ENCODE measurements at regions of chr13 and their contacts with region 1.

Region 1: GRCh38 chr13:99916366-99917103 is 55.0 kb downstream of the ZIC5 start:
- DNase-seq: peak; percentile 86
- H3K4me3 Mint-ChIP-seq: no peak overlapping the region
- H3K27ac Mint-ChIP-seq: no peak overlapping the region
- H3K4me1 Mint-ChIP-seq: peaks cover 6% of the 10 kb centered on the region
- H3K27me3 Mint-ChIP-seq: no peaks in the 10 kb centered on the region
- CTCF ChIP-seq: peak; percentile 91

Region 2: DNA sequence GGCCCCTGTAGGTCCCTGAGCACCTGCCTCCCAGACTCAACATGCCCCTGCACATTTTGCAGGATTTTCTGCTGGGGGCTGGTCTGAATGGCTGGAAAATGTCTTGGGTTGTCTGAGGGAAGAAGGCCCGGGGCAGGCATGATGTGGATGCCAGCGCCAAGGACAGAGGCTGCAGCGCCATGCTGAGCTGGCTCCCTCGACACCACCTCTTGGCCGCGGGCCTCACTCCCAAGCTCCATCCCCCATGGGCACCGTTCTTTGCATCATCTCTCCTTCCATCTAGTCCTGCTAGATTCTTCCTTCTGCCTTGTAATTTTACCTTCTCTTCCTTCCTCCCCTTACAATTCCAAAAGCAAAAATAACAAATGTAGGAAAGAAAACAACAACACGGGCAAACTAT is 15.6 kb before region 1 on chr13:
- CTCF ChIA-PET with region 1: interaction called, 11 read pairs
- POLR2A ChIA-PET with region 1: no interaction called
- intact Hi-C with region 1: no loop called
- DNase-seq: no peak
- H3K4me3 Mint-ChIP-seq: no peak overlapping the region
- H3K27ac Mint-ChIP-seq: no peak overlapping the region
- H3K4me1 Mint-ChIP-seq: peaks cover 7% of the 10 kb centered on the region
- H3K27me3 Mint-ChIP-seq: no peaks in the 10 kb centered on the region
- CTCF ChIP-seq: no peak

Region 3: DNA sequence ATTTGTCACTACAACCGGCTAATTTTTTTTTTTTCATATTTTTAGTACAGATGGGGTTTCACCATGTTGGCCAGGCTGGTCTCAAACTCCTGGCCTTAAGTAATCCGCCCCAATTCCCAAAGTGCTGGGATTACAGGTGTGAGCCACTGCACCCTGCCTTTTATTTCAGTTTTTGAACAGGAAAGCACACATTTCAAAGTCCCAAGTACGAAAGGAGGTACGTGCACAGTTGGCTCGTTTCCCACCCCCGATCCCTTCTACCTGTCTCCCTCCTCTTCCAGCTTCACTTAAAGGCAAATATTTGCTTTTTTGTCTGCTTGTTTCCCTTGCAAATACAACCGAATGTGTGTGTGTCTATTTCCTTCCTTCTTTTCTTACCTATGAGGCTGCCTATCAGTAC is 24.6 kb after region 1 on chr13:
- CTCF ChIA-PET with region 1: interaction called, 12 read pairs
- POLR2A ChIA-PET with region 1: no interaction called
- intact Hi-C with region 1: no loop called
- DNase-seq: no peak
- H3K4me3 Mint-ChIP-seq: no peak overlapping the region
- H3K27ac Mint-ChIP-seq: no peak overlapping the region
- H3K4me1 Mint-ChIP-seq: no peaks in the 10 kb centered on the region
- H3K27me3 Mint-ChIP-seq: peaks cover 5% of the 10 kb centered on the region
- CTCF ChIP-seq: no peak

Region 4: DNA sequence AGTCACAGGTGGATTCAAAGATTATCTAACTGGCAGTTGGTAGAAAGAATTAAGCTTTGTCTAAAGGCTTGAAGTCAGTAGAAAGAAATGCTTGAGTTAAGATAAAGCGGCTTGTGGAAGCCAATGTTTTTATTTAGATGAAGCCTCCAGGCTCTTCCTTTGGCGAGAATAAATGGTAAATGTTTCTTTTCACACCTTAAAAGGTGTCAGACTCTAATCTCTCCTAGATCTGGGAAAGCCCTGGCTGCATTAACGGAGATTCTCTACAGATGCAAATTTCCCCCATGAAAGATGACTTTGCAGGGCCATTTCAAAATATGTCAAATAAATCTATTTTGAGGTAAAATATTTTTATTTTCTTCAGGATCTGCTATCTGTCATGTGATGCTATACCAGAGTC is 134.5 kb after region 1 on chr13:
- CTCF ChIA-PET with region 1: no interaction called
- POLR2A ChIA-PET with region 1: no interaction called
- intact Hi-C with region 1: no loop called
- DNase-seq: no peak
- H3K4me3 Mint-ChIP-seq: no peak overlapping the region
- H3K27ac Mint-ChIP-seq: no peak overlapping the region
- H3K4me1 Mint-ChIP-seq: no peaks in the 10 kb centered on the region
- H3K27me3 Mint-ChIP-seq: no peaks in the 10 kb centered on the region
- CTCF ChIP-seq: no peak